ENCODE measurements at regions of chr7 and their contacts with region 1.

Region 1: DNA sequence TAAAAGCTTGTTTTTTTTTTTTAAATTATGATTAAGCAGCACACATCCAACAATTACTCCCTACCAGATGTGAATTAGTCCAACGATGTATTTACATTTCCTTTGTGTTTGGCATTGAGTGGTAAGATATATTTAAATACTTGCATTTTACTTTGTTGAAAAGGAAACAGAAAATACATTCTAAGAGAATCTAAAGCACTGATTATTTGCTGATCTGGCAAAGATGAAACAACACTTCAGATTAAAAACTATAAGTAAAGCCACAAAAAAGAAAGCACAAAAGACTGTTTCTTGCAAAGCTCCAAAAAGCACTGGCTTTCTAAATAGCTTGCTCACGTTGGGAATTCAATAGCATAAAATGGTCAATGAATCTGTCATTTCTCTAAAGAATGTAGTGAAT is 466.5 kb downstream of the PHTF2 start:
- DNase-seq: no peak
- H3K4me3 ChIP-seq: no peak overlapping the region
- H3K27ac ChIP-seq: no peak overlapping the region
- H3K4me1 ChIP-seq: no peaks in the 10 kb centered on the region
- H3K27me3 ChIP-seq: no peaks in the 10 kb centered on the region
- CTCF ChIP-seq: no peak
- POLR2A ChIP-seq: no peak

Region 2: GRCh38 chr7:78296644-78297371 is 31.7 kb after region 1 on chr7:
- intact Hi-C with region 1: no loop called
- DNase-seq: no peak
- H3K4me3 ChIP-seq: no peak overlapping the region
- H3K27ac ChIP-seq: no peak overlapping the region
- H3K4me1 ChIP-seq: no peaks in the 10 kb centered on the region
- H3K27me3 ChIP-seq: no peaks in the 10 kb centered on the region
- CTCF ChIP-seq: no peak
- POLR2A ChIP-seq: no peak

Region 3: GRCh38 chr7:78783179-78783962 is 518.3 kb after region 1 on chr7:
- intact Hi-C with region 1: no loop called
- DNase-seq: no peak
- H3K4me3 ChIP-seq: no peak overlapping the region
- H3K27ac ChIP-seq: no peak overlapping the region
- H3K4me1 ChIP-seq: no peaks in the 10 kb centered on the region
- H3K27me3 ChIP-seq: no peaks in the 10 kb centered on the region
- CTCF ChIP-seq: no peak
- POLR2A ChIP-seq: no peak

Region 4: GRCh38 chr7:79272066-79272669 is 1007.1 kb after region 1 on chr7:
- intact Hi-C with region 1: loop called (anchors 5 kb)
- DNase-seq: no peak
- H3K4me3 ChIP-seq: no peak overlapping the region
- H3K27ac ChIP-seq: no peak overlapping the region
- H3K4me1 ChIP-seq: no peaks in the 10 kb centered on the region
- H3K27me3 ChIP-seq: no peaks in the 10 kb centered on the region
- CTCF ChIP-seq: peak in 2 of 3 donors; percentile 37 to 55
- POLR2A ChIP-seq: no peak